GM10248 (cell line): ENCODE measurements at regions of chr16 and their contacts with region 1.

Region 1: GRCh38 chr16:30407102-30407803 is at the start of gene ZNF771:
- DNase-seq: peak; percentile 93
- CTCF ChIP-seq: no peak

Region 2: GRCh38 chr16:30340621-30341020 is 66.6 kb before region 1 on chr16:
- CTCF ChIA-PET with region 1: interaction called, 10 read pairs
- POLR2A ChIA-PET with region 1: no interaction called
- DNase-seq: no peak
- CTCF ChIP-seq: no peak

Region 3: GRCh38 chr16:30382111-30382881 is 25.0 kb before region 1 on chr16 and contains the start of gene SEPTIN1:
- CTCF ChIA-PET with region 1: interaction called, 20 read pairs
- POLR2A ChIA-PET with region 1: interaction called, 4 read pairs
- DNase-seq: peak; percentile 73
- CTCF ChIP-seq: no peak

Region 4: DNA sequence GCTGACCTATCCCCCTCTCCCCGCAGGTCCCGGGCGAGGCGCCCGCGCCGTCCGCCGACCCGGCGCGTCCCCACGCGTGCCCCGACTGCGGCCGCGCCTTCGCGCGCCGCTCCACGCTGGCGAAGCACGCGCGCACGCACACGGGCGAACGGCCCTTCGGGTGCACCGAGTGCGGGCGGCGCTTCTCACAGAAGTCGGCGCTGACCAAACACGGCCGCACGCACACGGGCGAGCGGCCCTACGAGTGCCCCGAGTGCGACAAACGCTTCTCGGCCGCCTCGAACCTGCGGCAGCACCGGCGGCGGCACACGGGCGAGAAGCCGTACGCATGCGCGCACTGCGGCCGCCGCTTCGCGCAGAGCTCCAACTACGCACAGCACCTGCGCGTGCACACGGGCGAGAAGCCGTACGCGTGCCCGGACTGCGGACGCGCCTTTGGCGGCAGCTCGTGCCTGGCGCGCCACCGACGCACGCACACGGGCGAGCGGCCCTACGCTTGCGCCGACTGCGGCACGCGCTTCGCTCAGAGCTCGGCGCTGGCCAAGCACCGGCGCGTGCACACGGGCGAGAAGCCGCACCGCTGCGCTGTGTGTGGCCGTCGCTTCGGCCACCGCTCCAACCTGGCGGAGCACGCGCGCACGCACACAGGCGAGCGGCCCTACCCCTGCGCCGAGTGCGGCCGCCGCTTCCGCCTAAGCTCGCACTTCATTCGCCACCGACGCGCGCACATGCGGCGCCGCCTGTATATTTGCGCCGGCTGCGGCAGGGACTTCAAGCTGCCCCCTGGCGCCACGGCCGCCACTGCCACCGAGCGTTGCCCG is 10.5 kb after region 1 on chr16:
- CTCF ChIA-PET with region 1: interaction called, 58 read pairs
- POLR2A ChIA-PET with region 1: interaction called, 8 read pairs
- DNase-seq: peak; percentile 79
- CTCF ChIP-seq: peak; percentile 33

Region 5: DNA sequence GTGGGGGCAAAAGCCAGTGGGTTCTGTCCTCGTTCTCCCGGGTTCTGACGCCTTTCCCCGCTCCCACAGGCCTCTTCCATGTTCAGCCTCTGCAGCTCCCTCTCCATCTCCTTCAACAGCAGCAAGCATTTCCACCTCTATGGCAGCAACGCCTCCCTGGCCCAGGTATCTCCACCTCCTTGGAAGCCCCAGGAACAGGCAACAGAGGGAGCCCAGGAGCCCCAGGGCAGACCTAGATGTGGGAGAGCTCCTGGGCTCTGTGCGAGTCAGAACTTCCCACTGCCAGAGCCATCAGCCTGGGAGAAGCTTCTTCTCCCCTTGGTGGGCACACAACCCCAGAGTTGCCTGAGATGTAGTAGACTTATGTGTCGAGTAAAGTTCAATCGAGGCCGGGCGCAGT is 111.3 kb after region 1 on chr16:
- CTCF ChIA-PET with region 1: no interaction called
- POLR2A ChIA-PET with region 1: no interaction called
- DNase-seq: no peak
- CTCF ChIP-seq: no peak

Region 6: GRCh38 chr16:30615358-30616091 is 208.3 kb after region 1 on chr16:
- CTCF ChIA-PET with region 1: interaction called, 37 read pairs
- POLR2A ChIA-PET with region 1: no interaction called
- DNase-seq: peak; percentile 50
- CTCF ChIP-seq: peak; percentile 74